ENCODE measurements at regions of chr1 and their contacts with region 1.

Region 1: DNA sequence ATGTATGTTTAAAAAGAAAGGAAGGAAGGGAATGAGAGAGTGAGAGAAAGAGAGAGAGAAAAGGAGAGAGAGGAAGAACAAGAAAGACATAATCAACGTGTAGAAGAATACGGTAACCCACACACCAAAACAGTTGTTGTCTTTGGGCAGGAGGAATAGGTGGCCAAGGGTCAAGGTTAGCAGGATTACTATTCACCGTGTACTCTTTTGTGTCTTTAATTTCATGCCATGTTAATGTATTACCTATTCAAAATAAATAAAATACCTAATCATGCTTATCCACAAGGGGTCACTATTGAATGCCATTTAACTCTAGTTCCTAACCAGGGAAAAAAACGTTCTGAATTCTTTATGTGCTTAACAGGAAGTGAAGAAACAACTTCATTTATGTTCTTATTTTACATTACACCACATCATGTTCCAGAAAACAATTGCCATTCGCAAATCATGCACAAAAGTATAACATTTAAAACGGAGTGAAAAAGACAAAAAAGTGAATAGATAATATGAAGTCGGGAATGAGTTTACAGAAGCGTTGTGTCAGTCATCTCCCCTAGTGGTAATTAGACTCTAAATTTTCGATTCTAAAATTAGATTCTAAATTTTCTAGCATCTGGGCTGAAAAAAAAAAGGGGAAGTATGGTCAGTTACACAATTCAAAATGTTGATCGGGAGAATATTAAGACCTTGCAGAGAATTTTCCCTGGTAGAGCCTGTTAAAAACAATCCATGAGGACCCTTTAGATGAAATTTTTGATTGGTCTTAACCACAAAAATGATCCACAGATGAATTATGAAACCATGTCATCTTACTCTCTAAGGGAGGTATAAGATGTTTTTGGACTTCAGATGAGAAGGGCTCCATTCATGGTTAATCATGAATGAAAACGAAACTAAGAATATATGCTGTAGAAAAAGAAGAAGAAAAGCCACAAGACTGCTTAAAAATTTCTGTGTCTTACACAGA is 700 bp upstream of the KMO start:
- DNase-seq: no peak
- ATAC-seq: peak; percentile 80 to 84
- H3K4me3 ChIP-seq: peak overlapping the region; percentile 95
- H3K27ac ChIP-seq: no peak overlapping the region
- H3K4me1 ChIP-seq: no peaks in the 10 kb centered on the region
- H3K27me3 ChIP-seq: no peaks in the 10 kb centered on the region

Region 2: GRCh38 chr1:241627453-241628259 is 96.2 kb after region 1 on chr1:
- intact Hi-C with region 1: loop called in 1 of 4 experiments (anchors 10 kb)
- DNase-seq: no peak
- ATAC-seq: peak in 1 of 2 donors; percentile 33
- H3K4me3 ChIP-seq: no peak overlapping the region
- H3K27ac ChIP-seq: no peak overlapping the region
- H3K4me1 ChIP-seq: no peaks in the 10 kb centered on the region
- H3K27me3 ChIP-seq: no peaks in the 10 kb centered on the region

Region 3: DNA sequence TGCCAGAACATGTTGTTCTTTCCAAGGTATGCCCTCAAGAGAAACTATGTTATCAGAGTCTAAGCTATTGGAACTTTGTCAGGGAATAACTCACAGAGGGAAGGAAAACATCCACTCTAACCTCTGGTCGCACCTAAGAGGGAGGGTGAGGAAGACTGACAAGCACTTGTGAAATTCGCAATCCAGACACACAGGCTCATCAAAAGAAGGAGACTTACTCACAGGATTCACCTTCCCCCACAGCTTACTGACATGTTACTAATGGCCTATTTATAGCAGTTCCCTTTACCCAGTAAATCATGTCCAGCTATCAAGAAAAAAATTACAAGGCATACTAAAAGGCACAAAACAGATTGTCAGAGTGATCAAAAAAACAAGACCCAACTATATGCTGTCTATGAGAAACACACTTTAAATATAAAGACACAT is 157.5 kb after region 1 on chr1:
- intact Hi-C with region 1: no loop called
- DNase-seq: no peak
- ATAC-seq: no peak
- H3K4me3 ChIP-seq: no peak overlapping the region
- H3K27ac ChIP-seq: no peak overlapping the region
- H3K4me1 ChIP-seq: no peaks in the 10 kb centered on the region
- H3K27me3 ChIP-seq: no peaks in the 10 kb centered on the region

Measured in right cardiac atrium (tissue), 5 donors.